Endothelial cell of umbilical vein (primary cell): ENCODE measurements at regions of chr2 and their contacts with region 1.

Region 1: DNA sequence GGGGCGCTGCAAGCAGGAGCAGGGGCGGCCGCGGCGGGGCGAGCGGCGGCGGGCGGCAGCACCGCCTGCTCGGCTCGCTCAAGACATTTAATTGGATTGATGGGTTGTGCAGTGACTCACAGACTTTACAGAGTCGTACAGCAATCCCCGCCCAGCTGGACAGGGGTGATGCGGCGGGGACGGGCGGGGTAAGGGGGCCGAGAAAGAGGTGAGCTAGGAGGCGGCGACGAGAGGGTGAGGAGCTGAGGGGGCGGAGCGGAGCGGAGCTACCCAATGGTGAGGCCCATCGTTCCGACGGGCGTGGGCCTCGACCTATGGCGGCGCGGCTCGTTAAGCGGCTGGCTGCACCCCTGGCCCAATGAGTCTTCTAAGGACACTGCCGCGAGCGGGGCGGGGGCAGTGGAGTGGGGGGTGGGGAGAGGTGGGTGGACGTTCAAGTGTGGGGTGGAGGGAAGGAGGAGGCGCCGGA is 97.1 kb upstream of the SERTAD2 start:
- DNase-seq: peak; percentile 100
- H3K4me3 ChIP-seq: peak overlapping the region; percentile 74 to 96 (median 87)
- H3K27ac ChIP-seq: peak overlapping the region; percentile 83
- H3K4me1 ChIP-seq: peaks cover 17% of the 10 kb centered on the region
- H3K27me3 ChIP-seq: no peaks in the 10 kb centered on the region
- CTCF ChIP-seq: no peak
- POLR2A ChIP-seq: peak; percentile 95

Region 2: DNA sequence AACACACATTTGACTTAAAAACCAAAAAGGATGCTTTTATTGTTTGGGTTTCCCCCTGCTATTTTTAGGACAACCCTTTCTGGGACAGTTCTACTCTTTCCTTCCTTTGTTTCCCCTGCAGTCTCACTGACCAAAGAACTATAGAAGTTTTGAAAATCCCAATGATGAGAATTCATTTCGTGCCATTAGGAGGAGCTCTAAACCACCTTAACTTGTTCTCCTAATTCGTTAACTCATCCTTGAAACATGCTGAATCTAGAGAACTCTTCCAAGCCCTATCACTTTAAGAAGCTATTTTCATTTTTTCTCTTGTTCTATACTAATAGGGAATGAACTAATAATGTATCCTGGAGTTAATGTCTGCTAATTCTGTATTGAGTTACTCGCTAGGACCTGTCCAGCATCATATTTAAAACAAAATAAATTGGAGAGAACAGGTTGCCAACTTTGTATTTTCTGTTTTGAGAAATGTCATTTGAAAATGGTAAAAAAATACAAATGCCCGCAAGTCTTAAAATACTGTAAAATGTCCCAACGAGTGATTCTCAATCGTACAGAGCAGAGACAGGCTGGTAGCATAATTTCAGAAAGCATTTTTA is 163.9 kb before region 1 on chr2:
- CTCF ChIA-PET with region 1: interaction called, 9 read pairs
- POLR2A ChIA-PET with region 1: no interaction called
- dilution Hi-C with region 1: no loop called
- intact Hi-C with region 1: loop called (anchors 5 kb)
- DNase-seq: peak; percentile 69
- H3K4me3 ChIP-seq: no peak overlapping the region
- H3K27ac ChIP-seq: no peak overlapping the region
- H3K4me1 ChIP-seq: peaks cover 8% of the 10 kb centered on the region
- H3K27me3 ChIP-seq: no peaks in the 10 kb centered on the region
- CTCF ChIP-seq: peak; percentile 35 to 54
- POLR2A ChIP-seq: no peak

Region 3: DNA sequence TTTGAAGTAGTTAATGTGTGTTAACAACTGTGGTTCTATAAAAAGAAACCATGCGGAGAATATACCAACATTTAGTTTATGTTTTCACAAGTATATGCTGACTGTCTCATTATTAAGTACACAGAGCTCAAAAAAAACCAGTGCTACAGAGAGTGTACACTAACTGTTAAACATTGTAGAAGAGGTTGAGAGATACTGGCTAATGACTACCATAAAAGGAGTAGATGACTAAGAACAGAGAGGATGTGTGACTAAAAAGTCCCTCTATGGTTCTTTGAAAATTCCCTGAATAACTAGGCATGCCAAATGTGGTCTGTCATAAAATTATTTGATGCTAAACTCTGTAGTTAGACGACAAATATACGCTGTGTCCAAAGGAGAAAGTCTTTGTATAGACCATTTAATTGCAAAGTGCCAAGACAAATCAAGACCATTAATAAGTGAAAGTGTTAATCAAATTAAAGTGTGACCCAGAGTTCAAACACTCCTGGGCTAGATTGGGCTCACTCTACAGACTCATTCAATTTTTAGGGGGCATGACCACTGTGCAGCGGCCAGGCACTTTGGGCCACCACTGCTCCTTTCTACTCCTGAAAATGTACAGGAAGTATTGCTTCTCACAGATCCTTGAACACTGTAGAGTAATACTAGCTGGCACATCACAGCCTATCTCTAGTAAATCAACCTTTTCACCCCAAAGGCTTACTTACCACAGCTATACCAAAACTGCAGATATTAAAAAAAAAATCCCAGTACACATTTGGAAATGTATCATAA is 52.0 kb before region 1 on chr2:
- CTCF ChIA-PET with region 1: interaction called, 5 read pairs
- POLR2A ChIA-PET with region 1: interaction called, 7 read pairs
- dilution Hi-C with region 1: no loop called
- intact Hi-C with region 1: loop called (anchors 1 kb)
- DNase-seq: peak; percentile 82
- H3K4me3 ChIP-seq: no peak overlapping the region
- H3K27ac ChIP-seq: peak overlapping the region; percentile 79
- H3K4me1 ChIP-seq: peaks cover 28% of the 10 kb centered on the region
- H3K27me3 ChIP-seq: no peaks in the 10 kb centered on the region
- CTCF ChIP-seq: no peak
- POLR2A ChIP-seq: no peak

Region 4: GRCh38 chr2:64779117-64779690 is 28.4 kb after region 1 on chr2:
- CTCF ChIA-PET with region 1: interaction called, 13 read pairs
- POLR2A ChIA-PET with region 1: interaction called, 8 read pairs
- dilution Hi-C with region 1: no loop called
- intact Hi-C with region 1: loop called (anchors 1 kb)
- DNase-seq: peak; percentile 88
- H3K4me3 ChIP-seq: no peak overlapping the region
- H3K27ac ChIP-seq: peak overlapping the region; percentile 85
- H3K4me1 ChIP-seq: peaks cover 29% of the 10 kb centered on the region
- H3K27me3 ChIP-seq: no peaks in the 10 kb centered on the region
- CTCF ChIP-seq: no peak
- POLR2A ChIP-seq: no peak

Region 5: GRCh38 chr2:64859312-64860212 is 108.7 kb after region 1 on chr2:
- CTCF ChIA-PET with region 1: interaction called, 20 read pairs
- POLR2A ChIA-PET with region 1: interaction called, 10 read pairs
- dilution Hi-C with region 1: no loop called
- intact Hi-C with region 1: loop called (anchors 1 kb)
- DNase-seq: peak; percentile 76
- H3K4me3 ChIP-seq: peak overlapping the region in 2 of 3 experiments; percentile 24 to 34
- H3K27ac ChIP-seq: peak overlapping the region; percentile 66
- H3K4me1 ChIP-seq: peaks cover 17% of the 10 kb centered on the region
- H3K27me3 ChIP-seq: no peaks in the 10 kb centered on the region
- CTCF ChIP-seq: peak in 1 of 2 donors; percentile 22
- POLR2A ChIP-seq: no peak

Region 6: DNA sequence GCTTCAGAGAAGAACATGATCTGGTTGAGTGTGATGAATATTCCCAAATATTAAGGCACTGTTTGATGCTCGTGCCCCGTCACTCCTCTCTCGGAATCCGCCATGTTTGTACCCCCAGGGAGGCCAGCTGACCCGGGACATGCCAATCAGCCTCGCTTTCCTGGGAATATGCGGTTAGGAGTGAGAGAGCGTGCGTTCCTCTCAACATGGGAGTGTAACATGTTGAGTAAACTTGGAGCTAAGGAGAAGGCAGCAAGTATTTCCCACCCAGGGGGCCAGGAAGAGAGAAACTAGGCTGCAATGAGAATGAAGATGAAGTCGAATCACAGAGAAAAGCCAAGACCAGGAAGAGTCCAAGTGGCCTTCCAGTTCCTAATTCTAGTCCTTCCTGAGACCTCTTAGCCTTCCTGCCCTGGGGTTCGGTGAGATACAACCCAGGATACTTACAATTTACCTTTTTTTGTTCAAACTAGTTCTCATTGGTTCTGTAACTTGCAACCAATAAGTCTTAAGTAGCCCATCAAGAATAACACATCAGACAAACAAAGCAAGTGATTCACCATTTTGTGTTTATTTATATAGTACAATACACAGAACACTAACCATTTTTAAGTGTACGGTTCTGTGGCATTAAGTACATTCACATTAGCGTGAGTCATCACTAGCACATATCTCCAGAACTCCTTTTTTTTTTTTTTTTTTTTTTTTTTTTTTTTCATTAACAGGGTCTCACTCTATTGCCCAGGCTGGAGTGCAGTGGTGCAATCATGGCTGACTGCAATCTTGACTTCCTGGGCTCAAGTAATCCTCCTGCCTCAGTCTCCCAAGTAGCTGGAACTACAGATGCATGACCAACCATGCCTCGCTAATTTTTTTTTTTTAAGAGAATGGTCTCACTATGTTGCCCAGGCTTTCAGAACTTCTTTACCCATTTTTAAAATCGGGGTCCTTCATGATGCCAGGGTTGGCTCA is 201.9 kb after region 1 on chr2:
- CTCF ChIA-PET with region 1: no interaction called
- POLR2A ChIA-PET with region 1: no interaction called
- dilution Hi-C with region 1: no loop called
- intact Hi-C with region 1: no loop called
- DNase-seq: peak; percentile 41
- H3K4me3 ChIP-seq: no peak overlapping the region
- H3K27ac ChIP-seq: no peak overlapping the region
- H3K4me1 ChIP-seq: peaks cover 4% of the 10 kb centered on the region
- H3K27me3 ChIP-seq: peaks cover 0 to 3% of the 10 kb centered on the region in 2 experiments
- CTCF ChIP-seq: no peak
- POLR2A ChIP-seq: no peak

Region 7: DNA sequence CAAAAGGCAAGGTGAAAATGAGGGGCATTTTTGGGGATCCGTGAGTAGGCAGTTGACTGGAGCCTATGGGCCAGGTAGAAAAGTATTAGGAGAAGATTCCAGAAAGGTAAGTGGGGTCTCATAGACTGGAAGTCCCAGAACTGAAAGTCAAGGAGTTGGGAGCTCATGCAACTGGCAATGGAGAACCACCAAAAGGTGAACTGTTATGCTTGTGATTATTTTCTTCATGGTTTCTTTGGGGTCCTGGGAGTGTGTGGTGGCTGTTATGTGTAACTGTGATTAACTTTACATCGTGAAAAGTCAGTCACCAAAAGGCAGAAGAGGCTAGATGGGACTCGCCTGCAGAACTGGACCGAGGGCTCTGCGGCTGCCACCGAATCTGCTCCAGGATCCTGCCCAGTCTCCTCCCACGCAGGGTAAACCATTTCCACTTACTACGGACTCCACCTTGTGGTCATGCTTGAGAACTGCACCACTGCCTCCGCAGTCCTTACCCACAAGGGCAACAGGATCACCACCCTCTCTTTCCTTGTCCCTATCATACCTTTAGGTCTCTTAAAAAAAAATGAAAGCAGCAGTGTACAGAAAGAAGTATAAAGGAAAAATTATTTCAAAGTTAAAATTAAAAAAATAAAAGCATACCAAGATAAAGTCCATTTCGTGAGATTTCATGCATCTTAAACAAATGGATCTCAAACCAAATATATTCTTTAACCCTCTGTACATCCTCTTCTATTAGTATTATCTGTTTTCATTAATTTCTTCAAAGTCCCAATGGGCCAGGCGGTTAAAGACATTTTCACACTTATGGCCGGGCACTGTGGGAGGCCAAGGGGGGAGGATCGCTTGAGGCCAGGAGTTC is 289.8 kb after region 1 on chr2:
- CTCF ChIA-PET with region 1: no interaction called
- POLR2A ChIA-PET with region 1: no interaction called
- dilution Hi-C with region 1: no loop called
- intact Hi-C with region 1: loop called (anchors 5 kb)
- DNase-seq: peak; percentile 83
- H3K4me3 ChIP-seq: no peak overlapping the region
- H3K27ac ChIP-seq: no peak overlapping the region
- H3K4me1 ChIP-seq: peaks cover 11% of the 10 kb centered on the region
- H3K27me3 ChIP-seq: no peaks in the 10 kb centered on the region
- CTCF ChIP-seq: peak; percentile 82 to 91
- POLR2A ChIP-seq: no peak